Endothelial cell of umbilical vein (primary cell): ENCODE measurements at regions of chr2 and their contacts with region 1.

Region 1: DNA sequence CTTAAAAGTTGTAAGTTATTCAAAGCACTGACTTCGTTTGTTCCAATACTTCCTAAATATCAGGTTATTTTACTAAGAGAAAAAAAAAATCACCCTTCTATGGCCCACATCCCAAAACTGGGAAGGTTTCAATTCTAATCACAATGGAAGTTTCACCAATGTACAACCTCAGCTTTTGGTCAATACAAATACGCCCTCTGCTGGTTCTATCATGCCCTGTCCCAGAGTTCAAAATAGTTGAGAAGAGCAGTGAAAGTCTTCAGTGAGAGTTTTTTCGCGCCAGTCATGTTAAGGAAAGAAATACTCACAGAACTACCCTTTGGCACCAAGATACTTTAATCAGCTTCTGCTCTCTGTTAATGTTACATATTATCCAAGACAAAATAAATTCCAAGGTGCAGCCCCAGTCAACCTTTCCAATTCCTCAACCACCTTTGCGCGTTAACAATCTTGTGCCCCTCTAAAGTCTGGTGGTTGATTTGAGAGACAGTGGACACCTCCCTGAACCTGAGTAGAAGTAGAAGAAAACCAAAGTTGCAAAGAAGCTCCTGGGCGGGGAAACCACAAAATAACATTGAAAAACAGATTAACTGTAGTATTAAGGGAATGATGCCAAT is 59.9 kb downstream of the SUMO1 start:
- DNase-seq: peak; percentile 70
- H3K4me3 ChIP-seq: no peak overlapping the region
- H3K27ac ChIP-seq: no peak overlapping the region
- H3K4me1 ChIP-seq: no peaks in the 10 kb centered on the region
- H3K27me3 ChIP-seq: no peaks in the 10 kb centered on the region
- CTCF ChIP-seq: peak; percentile 67 to 79
- POLR2A ChIP-seq: no peak

Region 2: GRCh38 chr2:201795607-201796477 is 382.6 kb before region 1 on chr2:
- CTCF ChIA-PET with region 1: interaction called, 10 read pairs
- POLR2A ChIA-PET with region 1: no interaction called
- dilution Hi-C with region 1: no loop called
- intact Hi-C with region 1: loop called (anchors 1 kb)
- DNase-seq: peak; percentile 44
- H3K4me3 ChIP-seq: no peak overlapping the region
- H3K27ac ChIP-seq: no peak overlapping the region
- H3K4me1 ChIP-seq: peaks cover 14% of the 10 kb centered on the region
- H3K27me3 ChIP-seq: no peaks in the 10 kb centered on the region
- CTCF ChIP-seq: peak; percentile 71
- POLR2A ChIP-seq: no peak

Region 3: DNA sequence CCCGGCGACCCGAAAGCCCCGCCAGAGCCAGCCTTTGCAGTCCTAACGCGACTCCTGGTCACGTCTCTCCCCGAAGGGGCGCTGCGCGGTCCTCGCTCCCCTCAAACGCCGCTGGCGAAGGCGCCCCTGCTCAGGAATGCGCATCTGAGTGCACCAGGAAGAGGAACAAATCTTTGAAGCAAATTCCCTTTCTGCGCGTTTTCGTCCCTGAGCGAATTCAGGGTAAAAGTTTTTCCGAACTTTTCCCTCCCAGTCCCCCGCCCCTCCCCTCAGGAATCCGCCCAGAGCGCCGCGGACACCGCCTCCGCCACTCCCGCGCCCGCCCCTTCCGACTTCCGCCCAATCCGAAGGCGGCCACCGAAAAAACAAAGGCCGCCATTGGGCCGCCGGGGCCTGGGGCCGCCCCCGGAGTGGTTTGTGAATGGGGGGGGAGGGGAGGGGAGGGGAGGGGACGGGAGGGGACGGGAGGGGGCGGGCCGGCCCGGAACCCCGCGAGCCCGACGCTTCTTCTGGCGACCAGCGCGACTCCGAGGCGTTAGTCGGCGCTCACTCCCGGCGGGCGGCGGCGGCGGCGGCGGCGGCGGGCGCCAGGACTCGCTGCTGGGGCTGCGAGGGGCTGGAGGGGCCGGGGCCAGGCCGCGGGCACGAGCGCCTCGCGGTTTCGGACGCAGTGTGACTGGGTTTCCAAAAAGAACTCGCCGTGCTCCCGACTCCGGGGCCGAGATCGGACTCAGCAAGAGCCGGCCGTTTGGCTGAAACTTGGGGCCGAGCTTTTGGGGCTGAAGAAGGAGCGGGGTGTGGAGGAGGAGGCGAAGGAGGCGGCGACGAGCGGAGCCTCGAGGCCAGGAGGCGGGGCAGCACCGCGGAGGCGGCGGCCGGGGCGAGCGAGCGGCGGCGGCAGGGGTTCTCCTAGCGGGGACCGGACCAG is 144.9 kb before region 1 on chr2 and contains the start of gene FZD7:
- CTCF ChIA-PET with region 1: no interaction called
- POLR2A ChIA-PET with region 1: no interaction called
- dilution Hi-C with region 1: no loop called
- intact Hi-C with region 1: loop called (anchors 1 kb)
- DNase-seq: peak; percentile 71
- H3K4me3 ChIP-seq: peak within 1 kb of the TSS; percentile 49 to 77 (median 62)
- H3K27ac ChIP-seq: no peak within 1 kb of the TSS
- H3K4me1 ChIP-seq: peaks cover 10% of the 10 kb centered on the region
- H3K27me3 ChIP-seq: peaks cover 64 to 81% of the 10 kb centered on the region in 2 experiments
- CTCF ChIP-seq: peak in 1 of 2 donors; percentile 18
- POLR2A ChIP-seq: no peak
- total RNA-seq, gene FZD7: 0.23 and 0.29 TPM in 2 replicates

Region 4: DNA sequence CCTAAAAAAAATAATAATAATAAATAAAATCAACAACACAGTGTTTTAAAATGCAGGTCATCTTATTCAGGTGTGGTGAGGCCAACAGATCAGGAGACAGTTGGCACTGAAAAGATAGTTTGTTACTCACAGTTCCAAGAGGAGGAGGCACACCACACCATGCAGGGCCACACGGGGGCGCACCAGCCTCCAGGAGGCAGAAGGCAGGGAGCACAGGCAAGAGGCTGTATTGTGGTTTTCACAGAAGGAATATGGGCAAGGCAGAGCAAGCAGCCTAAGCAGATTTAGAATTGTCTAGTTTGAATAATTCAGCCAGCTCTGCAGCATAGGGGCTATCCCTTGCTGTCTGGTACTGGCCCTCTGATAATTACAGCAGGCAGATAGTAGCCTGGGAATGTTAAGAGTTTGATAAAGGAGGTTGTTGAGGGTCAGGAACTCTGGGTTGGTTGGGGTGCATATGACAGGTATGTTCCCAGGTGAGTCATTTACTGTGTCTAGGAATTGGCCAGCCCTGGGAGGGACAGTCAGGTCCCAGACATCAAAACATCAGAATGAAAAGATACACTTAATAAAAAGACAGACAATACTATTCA is 74.1 kb before region 1 on chr2:
- CTCF ChIA-PET with region 1: interaction called, 8 read pairs
- POLR2A ChIA-PET with region 1: no interaction called
- dilution Hi-C with region 1: no loop called
- intact Hi-C with region 1: loop called (anchors 1 kb)
- DNase-seq: peak; percentile 24
- H3K4me3 ChIP-seq: no peak overlapping the region
- H3K27ac ChIP-seq: no peak overlapping the region
- H3K4me1 ChIP-seq: no peaks in the 10 kb centered on the region
- H3K27me3 ChIP-seq: peaks cover 13 to 30% of the 10 kb centered on the region in 2 experiments
- CTCF ChIP-seq: peak; percentile 69 to 74
- POLR2A ChIP-seq: no peak

Region 5: GRCh38 chr2:202161151-202161835 is 17.2 kb before region 1 on chr2:
- CTCF ChIA-PET with region 1: interaction called, 15 read pairs
- POLR2A ChIA-PET with region 1: no interaction called
- dilution Hi-C with region 1: no loop called
- intact Hi-C with region 1: no loop called
- DNase-seq: no peak
- H3K4me3 ChIP-seq: no peak overlapping the region
- H3K27ac ChIP-seq: no peak overlapping the region
- H3K4me1 ChIP-seq: no peaks in the 10 kb centered on the region
- H3K27me3 ChIP-seq: peaks cover 0 to 5% of the 10 kb centered on the region in 2 experiments
- CTCF ChIP-seq: no peak
- POLR2A ChIP-seq: no peak